Activated CD4-positive, alpha-beta memory T cell treated with anti-CD3 and anti-CD28 coated beads for 36 hours (primary cell): ENCODE measurements at regions of chr20 and their contacts with region 1.

Region 1: DNA sequence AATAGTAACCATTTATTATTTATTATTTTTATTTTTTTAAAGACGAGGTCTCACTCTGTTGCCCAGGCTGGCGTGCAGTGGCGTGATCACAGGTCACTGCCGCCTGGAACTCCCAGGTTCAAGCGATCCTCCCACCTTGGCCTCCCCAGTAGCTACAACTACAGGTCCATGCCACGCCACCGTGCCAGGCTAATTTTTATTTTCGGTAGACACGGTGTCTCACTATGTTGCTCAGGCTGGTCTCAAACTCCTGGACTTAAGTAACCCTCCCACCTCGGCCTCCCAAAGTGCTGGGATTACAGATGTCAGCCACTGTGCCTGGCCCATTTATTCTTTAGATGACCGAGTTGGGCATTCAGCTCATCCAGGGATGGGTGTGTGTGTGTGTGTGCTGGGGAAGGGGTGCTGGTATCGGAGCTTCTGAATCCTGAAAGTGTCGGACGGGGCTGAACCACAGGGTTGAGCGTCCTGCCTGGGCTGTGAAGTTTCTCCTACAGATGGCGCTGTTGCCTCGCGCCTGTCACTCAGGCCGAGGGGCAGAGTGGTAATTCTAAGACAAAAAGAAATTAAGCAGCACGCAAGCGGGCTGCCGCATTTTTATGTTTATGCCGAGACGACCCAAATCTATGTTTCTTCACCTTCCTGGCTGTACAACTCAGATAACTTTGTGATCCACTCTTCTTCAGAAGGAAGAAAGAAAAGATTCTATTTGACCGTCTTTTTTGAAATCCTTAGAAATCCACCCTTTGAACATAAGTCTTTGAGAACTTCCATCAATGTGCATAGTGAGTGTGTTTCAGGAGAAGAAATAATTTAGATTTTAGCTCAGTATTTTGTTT is 252.8 kb downstream of the CDH26 start:
- DNase-seq: peak; percentile 72
- H3K4me3 Mint-ChIP-seq: no peak overlapping the region
- H3K27ac Mint-ChIP-seq: no peak overlapping the region
- H3K4me1 Mint-ChIP-seq: peaks cover 4% of the 10 kb centered on the region
- H3K27me3 Mint-ChIP-seq: no peaks in the 10 kb centered on the region

Region 2: GRCh38 chr20:59940174-59940971 is 270.6 kb before region 1 on chr20 and contains the starts of genes FAM217B and PPP1R3D:
- CTCF ChIA-PET with region 1: no interaction called
- POLR2A ChIA-PET with region 1: no interaction called
- intact Hi-C with region 1: loop called (anchors 10 kb)
- DNase-seq: peak; percentile 95
- H3K4me3 Mint-ChIP-seq: peak within 1 kb of the TSS; percentile 98
- H3K27ac Mint-ChIP-seq: peak within 1 kb of the TSS; percentile 99
- H3K4me1 Mint-ChIP-seq: peaks cover 36% of the 10 kb centered on the region
- H3K27me3 Mint-ChIP-seq: no peaks in the 10 kb centered on the region
- total RNA-seq, gene FAM217B: 18.4 to 20.3 TPM
- total RNA-seq, gene PPP1R3D: 5.7 TPM

Region 3: GRCh38 chr20:60236613-60237012 is 25.6 kb after region 1 on chr20:
- CTCF ChIA-PET with region 1: no interaction called
- POLR2A ChIA-PET with region 1: no interaction called
- intact Hi-C with region 1: no loop called
- DNase-seq: no peak
- H3K4me3 Mint-ChIP-seq: no peak overlapping the region
- H3K27ac Mint-ChIP-seq: no peak overlapping the region
- H3K4me1 Mint-ChIP-seq: no peaks in the 10 kb centered on the region
- H3K27me3 Mint-ChIP-seq: peaks cover 12% of the 10 kb centered on the region

Region 4: DNA sequence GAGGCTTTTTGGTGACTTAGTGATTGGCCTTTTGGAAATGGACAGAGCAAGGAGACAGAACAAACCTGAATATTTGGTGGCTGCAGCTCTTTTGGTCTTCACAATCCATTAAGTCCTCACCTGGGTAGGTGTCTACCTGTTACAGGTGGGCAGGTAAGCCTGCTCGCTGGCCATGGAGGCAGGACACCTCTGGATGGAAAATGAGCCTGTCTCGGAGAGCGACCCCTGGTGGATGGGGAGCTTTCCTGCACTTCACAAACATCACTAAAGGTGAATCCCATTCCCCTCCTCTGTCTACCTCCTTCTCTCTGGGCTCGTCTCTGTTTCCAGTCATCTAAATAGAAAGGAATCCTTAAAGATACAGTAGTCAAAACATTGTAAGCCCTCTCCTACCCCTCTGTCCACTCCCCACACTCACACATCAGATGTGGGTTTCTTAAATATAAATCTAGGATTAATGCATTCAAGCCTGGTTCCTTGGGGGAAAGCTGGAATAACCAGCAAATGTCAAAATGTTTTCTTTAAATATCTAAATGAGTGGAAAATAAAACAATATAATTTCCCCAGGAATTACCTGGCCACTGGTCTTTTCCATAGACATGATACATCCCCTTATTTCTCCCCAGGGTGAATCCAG is 52.1 kb after region 1 on chr20:
- CTCF ChIA-PET with region 1: interaction called, 46 read pairs
- POLR2A ChIA-PET with region 1: no interaction called
- intact Hi-C with region 1: loop called (anchors 5 kb)
- DNase-seq: peak; percentile 66
- H3K4me3 Mint-ChIP-seq: no peak overlapping the region
- H3K27ac Mint-ChIP-seq: no peak overlapping the region
- H3K4me1 Mint-ChIP-seq: peaks cover 14% of the 10 kb centered on the region
- H3K27me3 Mint-ChIP-seq: no peaks in the 10 kb centered on the region

Region 5: DNA sequence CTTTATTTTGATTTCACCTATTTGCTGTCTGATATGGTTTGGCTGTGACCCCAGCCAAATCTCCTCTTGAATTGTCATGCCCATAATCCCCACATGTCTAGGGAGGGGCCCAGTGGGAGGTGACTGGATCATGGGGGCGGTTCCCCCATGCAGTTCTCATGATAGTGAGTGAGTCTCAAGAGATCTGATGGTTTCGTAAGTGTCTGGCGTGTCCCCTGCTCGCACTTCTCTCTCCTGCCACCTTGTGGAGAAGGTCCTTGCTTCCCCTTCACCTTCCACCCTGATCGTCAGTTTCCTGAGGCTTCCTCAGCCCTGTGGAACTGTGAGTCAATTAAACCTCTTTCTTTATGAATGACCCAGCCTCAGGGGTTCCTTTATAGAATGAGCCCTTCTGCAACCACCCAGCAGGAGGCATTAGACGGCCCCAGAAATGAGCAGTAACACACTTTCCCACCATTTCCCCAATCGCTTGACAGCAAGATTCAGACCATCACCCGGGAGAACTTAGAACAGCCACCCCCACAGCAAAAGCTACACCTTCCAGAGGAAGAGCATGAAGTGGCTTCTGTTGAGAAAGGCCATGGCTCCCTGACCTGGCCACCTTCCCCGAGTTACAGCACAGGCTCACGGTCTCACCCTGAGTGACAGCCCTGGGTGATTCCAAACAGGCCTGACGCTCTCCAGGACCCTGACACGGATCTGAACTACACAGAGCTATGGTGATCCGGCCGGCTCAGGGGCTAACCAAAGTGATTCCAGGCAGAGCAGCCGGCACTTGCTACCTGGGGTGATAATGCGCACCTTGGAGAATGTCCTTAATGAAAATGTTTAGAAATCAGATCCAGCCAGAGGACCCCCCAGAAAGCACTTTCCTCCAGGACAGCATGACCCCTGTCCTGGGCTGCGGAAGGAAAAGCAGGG is 909.9 kb after region 1 on chr20:
- CTCF ChIA-PET with region 1: no interaction called
- POLR2A ChIA-PET with region 1: no interaction called
- intact Hi-C with region 1: loop called (anchors 2 kb)
- DNase-seq: peak; percentile 46
- H3K4me3 Mint-ChIP-seq: no peak overlapping the region
- H3K27ac Mint-ChIP-seq: no peak overlapping the region
- H3K4me1 Mint-ChIP-seq: no peaks in the 10 kb centered on the region
- H3K27me3 Mint-ChIP-seq: no peaks in the 10 kb centered on the region